ENCODE measurements at regions of chr11 and their contacts with region 1.

Region 1: GRCh38 chr11:44911029-44911814 is 39.5 kb downstream of the TP53I11 start:
- DNase-seq: peak; percentile 59
- ATAC-seq: peak; percentile 95
- H3K4me3 ChIP-seq: no peak overlapping the region
- H3K27ac ChIP-seq: no peak overlapping the region
- H3K4me1 ChIP-seq: no peaks in the 10 kb centered on the region
- H3K27me3 ChIP-seq: no peaks in the 10 kb centered on the region
- CTCF ChIP-seq: peak; percentile 66 to 89 (median 80)
- POLR2A ChIP-seq: no peak
- RAD21 ChIP-seq: peak; percentile 83

Region 2: GRCh38 chr11:44416776-44417175 is 494.4 kb before region 1 on chr11:
- CTCF ChIA-PET with region 1: no interaction called
- POLR2A ChIA-PET with region 1: no interaction called
- RAD21 ChIA-PET with region 1: no interaction called
- intact Hi-C with region 1: no loop called
- DNase-seq: no peak
- ATAC-seq: no peak
- H3K4me3 ChIP-seq: no peak overlapping the region
- H3K27ac ChIP-seq: no peak overlapping the region
- H3K4me1 ChIP-seq: 0 out of 4 replicates have a peak, but pooled peaks cover 0 to 3% of the 10 kb centered on the region in 2 experiments
- H3K27me3 ChIP-seq: peaks cover 42% of the 10 kb centered on the region; the same call in 1 of the 2 replicates
- CTCF ChIP-seq: no peak
- POLR2A ChIP-seq: no peak
- RAD21 ChIP-seq: no peak

Region 3: GRCh38 chr11:44556735-44557409 is 354.4 kb before region 1 on chr11:
- CTCF ChIA-PET with region 1: interaction called, 7 read pairs
- POLR2A ChIA-PET with region 1: no interaction called
- RAD21 ChIA-PET with region 1: no interaction called
- intact Hi-C with region 1: loop called (anchors 1 kb)
- DNase-seq: peak; percentile 54
- ATAC-seq: peak; percentile 94
- H3K4me3 ChIP-seq: no peak overlapping the region
- H3K27ac ChIP-seq: no peak overlapping the region
- H3K4me1 ChIP-seq: peaks cover 9 to 12% of the 10 kb centered on the region in 2 experiments; a peak in 3 of 4 replicates
- H3K27me3 ChIP-seq: no peaks in the 10 kb centered on the region
- CTCF ChIP-seq: peak; percentile 65 to 95 (median 79)
- POLR2A ChIP-seq: no peak
- RAD21 ChIP-seq: peak; percentile 93

Region 4: DNA sequence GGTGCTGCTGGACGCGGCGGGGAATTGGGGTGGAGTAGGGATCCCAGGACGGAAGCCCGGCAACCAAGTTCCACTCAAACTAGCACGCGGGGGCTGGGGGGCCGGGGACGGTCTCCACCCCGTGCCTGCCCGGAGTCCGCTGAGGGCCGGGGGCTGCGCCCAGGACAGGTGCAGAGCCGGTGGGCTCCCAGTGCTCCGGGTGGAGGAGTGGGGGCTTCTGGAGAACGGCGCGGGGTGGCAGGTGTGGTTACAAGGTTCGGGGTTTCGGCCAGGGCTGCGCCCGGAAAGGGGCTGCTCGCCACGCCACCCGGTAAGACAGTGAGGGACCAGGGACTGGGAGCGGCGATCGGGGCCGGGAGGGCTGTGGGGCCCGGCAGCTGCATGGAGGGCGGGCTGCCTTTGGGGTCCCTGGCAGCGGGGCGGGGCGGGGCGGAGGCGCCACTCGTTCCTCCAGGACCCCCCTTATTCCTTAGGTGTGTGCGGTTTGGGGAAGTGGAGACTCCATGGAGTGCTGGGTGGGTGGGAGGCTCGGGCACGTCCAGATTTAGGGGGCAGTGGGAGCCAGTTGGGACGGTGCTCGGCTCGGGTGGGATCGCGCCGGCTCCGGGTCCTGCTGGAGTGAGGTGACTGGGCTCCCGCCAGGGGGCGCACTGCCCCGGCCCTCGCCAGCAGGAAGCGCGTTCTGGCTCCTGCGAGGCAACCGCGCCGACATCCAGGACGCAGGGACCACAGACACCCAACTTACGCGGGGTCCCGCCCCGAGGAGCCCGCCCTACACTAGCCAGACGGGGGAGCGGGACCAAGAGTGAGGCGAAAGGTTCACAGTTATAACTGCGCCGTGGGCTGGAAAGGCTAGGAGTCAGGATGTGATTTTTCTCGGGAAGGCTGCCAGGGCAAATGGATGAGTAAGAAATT is 183.6 kb before region 1 on chr11:
- CTCF ChIA-PET with region 1: no interaction called
- POLR2A ChIA-PET with region 1: no interaction called
- RAD21 ChIA-PET with region 1: no interaction called
- intact Hi-C with region 1: loop called (anchors 5 kb)
- DNase-seq: peak; percentile 57
- ATAC-seq: peak; percentile 93
- H3K4me3 ChIP-seq: peak overlapping the region; percentile 74 to 82
- H3K27ac ChIP-seq: peak overlapping the region; percentile 48; the same call in 1 of the 2 replicates
- H3K4me1 ChIP-seq: peaks cover 4 to 18% of the 10 kb centered on the region in 2 experiments; a peak in 3 of 4 replicates
- H3K27me3 ChIP-seq: no peaks in the 10 kb centered on the region
- CTCF ChIP-seq: peak; percentile 70 to 83 (median 76); a peak in 5 of 6 replicates
- POLR2A ChIP-seq: no peak
- RAD21 ChIP-seq: peak; percentile 77

Region 5: GRCh38 chr11:44833877-44834452 is 77.3 kb before region 1 on chr11:
- CTCF ChIA-PET with region 1: no interaction called
- POLR2A ChIA-PET with region 1: no interaction called
- RAD21 ChIA-PET with region 1: no interaction called
- intact Hi-C with region 1: no loop called
- DNase-seq: no peak
- ATAC-seq: 0 out of 2 replicates have a peak, but pooled peaks have one; percentile 57
- H3K4me3 ChIP-seq: no peak overlapping the region
- H3K27ac ChIP-seq: no peak overlapping the region
- H3K4me1 ChIP-seq: peaks cover 13% of the 10 kb centered on the region in 2 experiments
- H3K27me3 ChIP-seq: no peaks in the 10 kb centered on the region
- CTCF ChIP-seq: no peak
- POLR2A ChIP-seq: no peak
- RAD21 ChIP-seq: no peak

Region 6: DNA sequence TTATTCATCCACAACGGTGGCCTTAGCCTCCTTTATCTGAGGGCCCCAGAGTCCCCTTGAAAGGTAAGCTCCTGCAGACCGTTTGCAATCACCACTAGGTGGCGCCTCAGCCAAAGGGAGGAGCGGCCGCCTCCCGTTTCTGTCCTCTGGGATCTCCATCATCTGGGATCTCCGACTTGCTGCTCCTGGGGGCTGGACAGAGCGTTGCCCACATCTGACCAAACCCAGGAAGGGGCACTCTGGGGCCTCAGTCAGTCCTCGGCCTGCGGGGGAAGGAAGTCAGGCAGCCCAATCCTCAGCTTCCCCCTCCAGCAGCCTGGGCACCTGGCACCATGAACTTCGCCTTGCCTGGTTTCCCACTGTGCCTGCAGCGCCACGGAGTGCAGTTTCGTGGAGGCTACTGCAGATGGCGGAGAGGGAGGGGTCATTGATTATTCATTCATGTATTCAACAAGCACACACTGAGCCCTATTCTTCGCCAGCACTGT is 16.0 kb after region 1 on chr11:
- CTCF ChIA-PET with region 1: interaction called, 13 read pairs
- POLR2A ChIA-PET with region 1: no interaction called
- RAD21 ChIA-PET with region 1: no interaction called
- intact Hi-C with region 1: no loop called
- DNase-seq: peak; percentile 42
- ATAC-seq: peak; percentile 90
- H3K4me3 ChIP-seq: no peak overlapping the region
- H3K27ac ChIP-seq: no peak overlapping the region
- H3K4me1 ChIP-seq: no peaks in the 10 kb centered on the region
- H3K27me3 ChIP-seq: no peaks in the 10 kb centered on the region
- CTCF ChIP-seq: peak; percentile 84 to 91 (median 86)
- POLR2A ChIP-seq: no peak
- RAD21 ChIP-seq: peak; percentile 81

Region 7: DNA sequence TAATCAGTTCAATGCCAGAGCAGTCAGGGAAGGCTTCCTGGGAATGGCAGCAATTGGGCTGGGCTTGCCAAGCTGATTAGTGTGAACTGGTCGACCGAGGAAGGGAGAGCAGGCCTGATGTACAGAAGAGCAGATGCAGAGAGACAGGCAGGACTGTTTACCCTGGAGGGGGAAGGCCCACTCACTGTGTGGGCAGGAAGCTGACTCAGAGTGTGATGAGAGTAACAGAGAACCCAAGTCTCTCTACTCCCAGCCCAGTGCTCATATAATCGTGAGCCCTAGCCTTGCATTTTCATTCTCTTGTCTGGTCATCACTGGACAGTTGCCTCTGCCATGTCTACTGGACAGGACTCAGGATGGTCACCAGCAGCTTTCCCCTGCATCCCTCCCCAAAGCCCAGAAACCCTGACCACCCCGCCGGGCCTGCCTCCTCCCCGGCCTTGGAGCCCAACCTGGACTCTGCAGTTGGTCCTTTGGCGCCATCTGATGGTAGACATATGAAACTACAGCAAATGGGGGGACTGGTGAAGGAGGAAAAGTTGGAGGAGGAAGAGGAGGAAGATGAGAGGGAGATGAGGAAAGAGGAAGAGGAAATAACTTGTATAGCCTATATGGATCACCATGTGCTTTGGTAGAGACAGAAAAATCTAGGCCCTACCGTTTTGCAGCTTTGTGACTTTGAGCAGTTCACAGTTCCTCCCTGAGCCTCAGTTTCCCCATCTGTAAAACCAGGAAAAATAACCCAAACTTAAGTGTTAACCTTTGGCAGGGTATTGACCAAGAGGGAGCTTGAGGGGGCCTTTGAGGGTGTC is 191.8 kb after region 1 on chr11:
- CTCF ChIA-PET with region 1: interaction called, 11 read pairs
- POLR2A ChIA-PET with region 1: no interaction called
- RAD21 ChIA-PET with region 1: interaction called in 1 of 2 experiments, 6 read pairs
- intact Hi-C with region 1: no loop called
- DNase-seq: peak; percentile 45
- ATAC-seq: peak; percentile 68
- H3K4me3 ChIP-seq: no peak overlapping the region
- H3K27ac ChIP-seq: no peak overlapping the region
- H3K4me1 ChIP-seq: peaks cover 0 to 7% of the 10 kb centered on the region in 2 experiments; a peak in 2 of 4 replicates
- H3K27me3 ChIP-seq: peaks cover 20% of the 10 kb centered on the region
- CTCF ChIP-seq: peak; percentile 91 to 97 (median 96)
- POLR2A ChIP-seq: no peak
- RAD21 ChIP-seq: peak; percentile 97

Measured in HCT116 (cell line).